ENCODE measurements at regions of chr22 and their contacts with region 1.

Region 1: GRCh38 chr22:50627642-50628542 is at the start of gene ARSA:
- DNase-seq: peak; percentile 82
- ATAC-seq: peak; percentile 83
- H3K4me3 Mint-ChIP-seq: peak within 1 kb of the TSS; percentile 80
- H3K27ac Mint-ChIP-seq: no peak within 1 kb of the TSS
- H3K4me1 Mint-ChIP-seq: peaks cover 7% of the 10 kb centered on the region
- H3K27me3 Mint-ChIP-seq: peaks cover 18% of the 10 kb centered on the region
- CTCF ChIP-seq: no peak
- total RNA-seq, gene ARSA: 17.7 to 18.8 TPM (median 17.8 TPM) in 3 replicates

Region 2: DNA sequence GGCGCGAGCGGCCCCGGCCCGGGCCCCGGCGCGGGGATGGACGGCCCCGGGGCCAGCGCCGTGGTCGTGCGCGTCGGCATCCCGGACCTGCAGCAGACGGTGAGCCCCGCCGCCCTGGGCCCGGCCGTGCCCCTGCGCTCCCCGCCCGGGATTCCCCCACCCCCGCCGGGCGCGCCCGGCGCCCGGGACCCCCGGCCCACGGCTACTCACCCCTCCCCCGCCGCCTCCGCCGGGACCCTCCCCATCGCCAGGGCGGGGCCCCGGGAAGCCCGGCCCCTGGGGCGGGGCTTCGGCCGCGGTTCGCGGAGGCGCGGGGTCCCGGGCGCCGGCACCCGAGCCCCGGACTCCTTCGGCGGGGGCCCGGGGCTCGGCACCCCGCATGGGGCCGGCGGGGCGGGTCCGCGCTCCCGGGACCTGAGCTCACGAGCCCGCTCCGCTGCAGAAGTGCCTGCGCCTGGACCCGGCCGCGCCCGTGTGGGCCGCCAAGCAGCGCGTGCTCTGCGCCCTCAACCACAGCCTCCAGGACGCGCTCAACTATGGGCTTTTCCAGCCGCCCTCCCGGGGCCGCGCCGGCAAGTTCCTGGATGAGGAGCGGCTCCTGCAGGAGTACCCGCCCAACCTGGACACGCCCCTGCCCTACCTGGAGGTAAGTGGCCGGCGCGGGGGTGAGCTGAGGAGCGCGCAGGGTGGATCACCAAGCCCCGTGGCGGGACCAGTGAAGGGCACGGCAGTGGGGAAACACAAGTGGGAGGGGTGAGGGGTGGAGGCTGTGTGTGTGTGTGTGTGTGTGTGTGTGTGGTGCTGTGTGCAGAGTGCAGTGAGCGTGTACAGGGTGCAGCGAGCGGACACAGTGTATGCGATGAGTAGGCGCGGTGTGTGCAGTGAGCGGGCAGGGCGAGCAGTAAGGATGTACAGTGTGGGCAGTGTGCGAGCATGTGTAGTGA is 47.0 kb after region 1 on chr22:
- CTCF ChIA-PET with region 1: interaction called, 11 read pairs
- POLR2A ChIA-PET with region 1: no interaction called
- DNase-seq: peak; percentile 90
- ATAC-seq: peak; percentile 89
- H3K4me3 Mint-ChIP-seq: peak overlapping the region; percentile 60
- H3K27ac Mint-ChIP-seq: no peak overlapping the region
- H3K4me1 Mint-ChIP-seq: peaks cover 13% of the 10 kb centered on the region
- H3K27me3 Mint-ChIP-seq: peaks cover 46% of the 10 kb centered on the region
- CTCF ChIP-seq: no peak

Region 3: DNA sequence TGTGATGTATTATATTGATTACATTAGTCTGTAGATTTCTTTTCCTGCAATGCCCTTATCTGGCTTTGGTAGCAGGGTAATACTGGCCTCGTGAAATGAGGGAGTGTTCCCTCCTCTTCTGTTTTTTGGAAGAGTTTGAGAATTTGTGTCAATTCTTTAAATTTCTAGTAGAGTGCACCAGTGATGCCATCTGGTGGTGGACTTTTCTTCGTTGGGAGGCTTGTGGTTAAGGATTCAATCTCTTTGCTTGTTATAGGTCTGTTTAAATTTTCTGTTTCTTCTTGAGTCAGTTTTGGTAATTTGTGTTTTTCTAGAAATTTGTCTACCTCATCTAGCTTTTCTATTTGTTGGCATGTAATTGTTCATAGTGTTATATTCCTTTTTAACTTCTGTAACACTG is 63.6 kb after region 1 on chr22:
- CTCF ChIA-PET with region 1: interaction called, 78 read pairs
- POLR2A ChIA-PET with region 1: interaction called, 3 read pairs
- DNase-seq: no peak
- ATAC-seq: no peak
- H3K4me3 Mint-ChIP-seq: no peak overlapping the region
- H3K27ac Mint-ChIP-seq: no peak overlapping the region
- H3K4me1 Mint-ChIP-seq: peaks cover 5% of the 10 kb centered on the region; the same call in 1 of the 2 replicates
- H3K27me3 Mint-ChIP-seq: peaks cover 10% of the 10 kb centered on the region
- CTCF ChIP-seq: 0 out of 2 replicates have a peak, but pooled peaks have one; percentile 26